ENCODE measurements at regions of chr4 and their contacts with region 1.

Region 1: GRCh38 chr4:75989846-75990528 is 758 bp downstream of the SDAD1 start:
- DNase-seq: no peak

Region 2: GRCh38 chr4:76108467-76109181 is 118.6 kb after region 1 on chr4:
- intact Hi-C with region 1: no loop called
- DNase-seq: no peak

Region 3: DNA sequence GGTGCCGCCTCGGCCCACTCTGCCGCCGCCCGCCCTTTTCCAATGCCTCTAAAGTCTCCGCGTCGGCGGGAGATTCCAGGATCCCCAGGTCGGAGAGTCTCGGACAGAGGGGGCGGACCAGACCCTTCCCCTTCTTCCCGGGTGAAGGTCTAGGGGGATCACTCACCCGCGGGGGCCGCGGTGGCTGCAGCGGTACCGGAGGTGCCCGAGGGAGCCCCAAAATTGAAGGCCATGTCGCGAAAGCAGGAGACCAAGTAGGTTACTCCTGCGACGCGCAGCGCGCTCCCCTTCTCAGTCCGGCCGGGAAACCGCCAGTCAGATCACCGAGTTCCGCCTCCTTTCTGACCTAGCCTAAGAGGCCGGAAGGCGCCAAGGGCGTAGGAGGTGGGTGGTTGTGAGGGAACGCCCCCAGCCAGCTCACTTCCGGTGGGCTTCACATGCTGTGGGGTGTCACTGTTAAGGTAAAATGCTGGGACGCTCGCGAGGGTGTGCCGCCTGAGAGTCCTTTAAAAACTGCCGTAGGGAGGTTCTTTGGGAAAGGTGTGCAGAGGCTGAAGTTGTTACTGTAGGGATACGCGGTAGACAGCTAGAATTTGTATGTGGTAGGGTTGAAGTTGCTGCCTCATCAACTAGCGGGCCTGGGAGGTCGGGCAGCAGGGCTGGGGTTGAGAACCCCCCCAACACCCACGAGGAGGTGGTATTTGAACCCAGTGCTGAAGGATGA is 158.3 kb after region 1 on chr4 and contains the start of gene NUP54:
- intact Hi-C with region 1: loop called (anchors 5 kb)
- DNase-seq: peak; percentile 92 to 99 (median 95)

Measured in posterior cingulate gyrus (tissue), 11 donors.